ENCODE measurements at regions of chr20 and their contacts with region 1.

Region 1: DNA sequence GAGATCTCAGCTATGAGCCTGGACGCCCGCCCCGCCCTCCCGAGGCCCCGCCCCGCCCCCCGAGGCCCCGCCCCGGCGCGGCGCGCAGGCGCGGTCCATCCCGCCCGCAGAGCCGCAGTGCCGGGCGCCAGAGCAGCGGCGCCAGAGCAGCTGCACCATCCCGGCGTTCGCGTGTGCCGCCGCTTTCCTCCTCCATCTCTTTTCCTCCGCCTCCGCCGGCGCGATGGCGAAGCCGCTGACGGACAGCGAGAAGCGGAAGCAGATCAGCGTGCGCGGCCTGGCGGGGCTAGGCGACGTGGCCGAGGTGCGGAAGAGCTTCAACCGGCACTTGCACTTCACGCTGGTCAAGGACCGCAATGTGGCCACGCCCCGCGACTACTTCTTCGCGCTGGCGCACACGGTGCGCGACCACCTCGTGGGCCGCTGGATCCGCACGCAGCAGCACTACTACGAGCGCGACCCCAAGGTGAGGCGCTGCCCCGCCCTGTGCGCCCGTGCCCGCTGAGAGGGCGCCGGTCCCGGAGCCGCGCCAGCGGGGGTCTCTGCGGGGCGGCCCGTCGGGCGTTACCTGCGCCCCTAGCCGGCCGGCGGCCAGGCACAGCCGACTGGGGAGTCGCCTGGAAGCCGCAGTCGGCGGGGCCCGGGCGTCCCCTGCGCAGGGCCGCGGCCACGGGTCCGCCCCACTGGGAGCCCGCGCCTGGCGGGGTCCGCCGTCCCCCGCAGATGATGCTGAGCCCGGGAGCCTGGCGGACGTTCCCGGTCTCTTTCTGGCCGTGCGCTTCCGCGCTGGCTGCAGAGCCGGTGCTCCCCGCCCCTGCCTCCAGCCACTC is at the start of gene PYGB:
- DNase-seq: peak; percentile 81 to 82
- H3K4me3 ChIP-seq: peak within 1 kb of the TSS; percentile 97
- H3K4me3 Mint-ChIP-seq: peak within 1 kb of the TSS; percentile 91
- H3K27ac Mint-ChIP-seq: peak within 1 kb of the TSS; percentile 79
- H3K4me1 ChIP-seq: peaks cover 30% of the 10 kb centered on the region
- H3K4me1 Mint-ChIP-seq: peaks cover 15% of the 10 kb centered on the region
- H3K27me3 ChIP-seq: no peaks in the 10 kb centered on the region
- H3K27me3 Mint-ChIP-seq: no peaks in the 10 kb centered on the region
- CTCF ChIP-seq: no peak
- total RNA-seq, gene PYGB: 67.9 and 78.9 TPM in 2 replicates

Region 2: DNA sequence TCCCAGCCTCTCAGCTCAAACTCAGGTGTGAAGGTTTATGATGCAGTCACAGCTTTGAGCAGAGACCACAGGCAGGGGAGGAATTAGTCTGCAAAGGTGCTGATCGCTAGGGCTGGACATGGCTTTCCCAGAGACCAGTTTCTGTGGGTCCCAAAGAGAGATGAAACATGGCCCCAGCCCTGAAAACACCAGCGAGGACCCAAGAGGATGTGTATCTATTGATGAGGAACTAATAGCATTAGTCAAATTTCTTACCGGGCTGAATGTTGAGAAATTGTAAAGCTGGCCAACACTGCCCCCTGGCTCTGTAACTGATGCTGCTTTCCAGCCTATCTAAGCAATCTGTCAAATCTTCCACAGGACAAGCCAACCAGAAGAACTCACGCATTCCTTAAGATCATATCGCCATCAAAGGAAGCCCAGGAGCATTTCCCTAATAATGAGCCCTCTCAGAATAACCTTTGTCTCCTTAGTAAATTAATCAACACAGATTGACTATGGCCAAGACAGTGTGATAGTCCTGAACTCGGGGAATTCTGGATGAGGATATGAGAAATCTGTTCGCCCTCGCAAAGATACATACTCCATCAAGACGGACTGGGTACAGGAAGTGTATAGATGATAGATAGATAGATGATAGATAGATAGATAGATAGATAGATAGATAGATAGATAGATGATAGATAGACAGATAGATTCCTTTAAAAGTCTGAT is 182.4 kb before region 1 on chr20:
- CTCF ChIA-PET with region 1: interaction called, 6 read pairs
- POLR2A ChIA-PET with region 1: interaction called, 3 read pairs
- intact Hi-C with region 1: loop called (anchors 10 kb)
- DNase-seq: peak; percentile 73 to 77
- H3K4me3 ChIP-seq: no peak overlapping the region
- H3K4me3 Mint-ChIP-seq: peak overlapping the region; percentile 68
- H3K27ac Mint-ChIP-seq: peak overlapping the region; percentile 56
- H3K4me1 ChIP-seq: peaks cover 34% of the 10 kb centered on the region
- H3K4me1 Mint-ChIP-seq: peaks cover 40% of the 10 kb centered on the region
- H3K27me3 ChIP-seq: no peaks in the 10 kb centered on the region
- H3K27me3 Mint-ChIP-seq: no peaks in the 10 kb centered on the region
- CTCF ChIP-seq: peak; percentile 80 to 91

Region 3: DNA sequence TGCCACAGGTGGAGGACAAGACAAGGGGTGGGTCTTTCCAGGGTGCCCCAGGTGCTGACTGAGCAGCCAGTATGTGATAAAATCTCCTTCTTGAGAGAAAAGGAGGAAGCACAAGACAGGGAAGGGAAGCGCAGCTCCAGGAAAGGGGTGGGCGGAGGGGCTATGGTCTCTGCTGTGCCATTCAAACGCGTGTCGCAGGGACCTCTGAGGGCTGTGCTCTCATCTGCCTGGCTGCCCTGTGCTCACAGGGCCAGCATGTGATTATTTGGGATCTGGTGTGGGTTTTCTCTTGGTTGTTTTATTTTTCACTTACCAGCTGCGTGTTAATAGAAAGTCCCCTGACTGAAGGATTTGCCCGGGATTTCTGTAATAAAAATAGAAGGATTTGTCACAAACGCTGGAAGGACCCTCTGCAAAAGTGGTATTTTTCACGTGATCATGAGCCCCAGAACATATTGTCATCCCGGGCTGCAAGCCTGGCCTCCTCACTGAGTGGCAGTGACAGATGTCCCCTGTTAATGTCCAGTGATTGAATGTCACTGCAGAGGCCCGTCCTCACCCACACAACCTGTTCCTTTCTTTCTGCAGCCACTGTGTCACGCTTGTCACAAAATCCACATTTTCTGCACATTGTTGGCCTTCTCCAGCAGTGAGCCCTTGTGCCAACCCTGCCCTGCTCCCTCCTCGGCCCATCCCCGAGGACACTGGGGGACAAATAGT is 131.3 kb before region 1 on chr20:
- CTCF ChIA-PET with region 1: no interaction called
- POLR2A ChIA-PET with region 1: no interaction called
- intact Hi-C with region 1: no loop called
- DNase-seq: no peak
- H3K4me3 ChIP-seq: no peak overlapping the region
- H3K4me3 Mint-ChIP-seq: no peak overlapping the region
- H3K27ac Mint-ChIP-seq: no peak overlapping the region
- H3K4me1 ChIP-seq: peaks cover 15% of the 10 kb centered on the region
- H3K4me1 Mint-ChIP-seq: peaks cover 3% of the 10 kb centered on the region
- H3K27me3 ChIP-seq: no peaks in the 10 kb centered on the region
- H3K27me3 Mint-ChIP-seq: peaks cover 5% of the 10 kb centered on the region
- CTCF ChIP-seq: no peak

Region 4: DNA sequence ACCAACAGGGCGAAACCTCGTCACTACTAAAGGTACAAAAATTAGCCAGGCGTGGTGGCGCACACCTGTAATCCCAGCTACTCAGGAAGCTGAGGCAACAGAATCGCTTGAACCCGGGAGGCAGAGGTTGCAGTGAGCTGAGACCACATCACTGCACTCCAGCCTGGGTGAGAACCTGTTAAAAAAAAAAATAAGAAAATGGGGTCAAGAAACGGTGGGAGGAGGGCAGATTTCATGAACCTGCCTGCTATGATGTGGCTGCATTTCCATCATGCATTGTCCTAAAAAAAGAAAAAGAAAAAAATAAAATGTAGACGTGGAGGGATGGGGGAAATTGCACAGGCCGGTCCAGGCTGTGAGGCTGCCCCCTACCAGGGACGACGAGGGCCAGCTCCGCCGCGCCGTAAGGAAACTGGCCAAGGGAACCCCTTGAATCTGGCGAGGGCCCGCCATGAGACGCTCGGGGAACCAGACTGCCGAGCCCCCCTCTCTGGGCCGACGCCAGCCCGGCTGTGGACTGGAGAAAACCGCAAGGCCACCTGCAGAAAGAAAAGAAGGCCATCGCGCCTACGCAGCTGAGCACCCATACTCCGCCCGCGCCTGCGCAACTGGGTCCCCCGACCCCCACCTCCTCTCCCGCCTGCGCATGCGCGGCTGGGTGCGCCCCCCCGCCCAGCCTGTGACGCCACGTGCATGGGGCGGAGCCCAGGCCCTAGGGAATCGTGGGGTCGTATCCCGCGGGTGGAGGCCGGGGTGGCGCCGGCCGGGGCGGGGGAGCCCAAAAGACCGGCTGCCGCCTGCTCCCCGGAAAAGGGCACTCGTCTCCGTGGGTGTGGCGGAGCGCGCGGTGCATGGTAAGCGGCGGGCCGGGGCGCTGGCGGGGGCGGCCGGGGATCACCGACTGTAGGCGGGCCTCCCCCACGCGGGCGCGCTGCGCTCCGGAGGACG is 52.9 kb before region 1 on chr20 and contains the start of gene ENTPD6:
- CTCF ChIA-PET with region 1: interaction called, 17 read pairs
- POLR2A ChIA-PET with region 1: interaction called, 18 read pairs
- intact Hi-C with region 1: loop called (anchors 1 kb)
- DNase-seq: peak; percentile 92 to 97
- H3K4me3 ChIP-seq: peak within 1 kb of the TSS; percentile 80
- H3K4me3 Mint-ChIP-seq: peak within 1 kb of the TSS; percentile 78
- H3K27ac Mint-ChIP-seq: peak within 1 kb of the TSS; percentile 33
- H3K4me1 ChIP-seq: peaks cover 4% of the 10 kb centered on the region; the same call in 1 of the 2 replicates
- H3K4me1 Mint-ChIP-seq: no peaks in the 10 kb centered on the region
- H3K27me3 ChIP-seq: no peaks in the 10 kb centered on the region
- H3K27me3 Mint-ChIP-seq: no peaks in the 10 kb centered on the region
- CTCF ChIP-seq: peak in 1 of 2 experiments; percentile 48
- total RNA-seq, gene ENTPD6: 86.6 and 89.4 TPM in 2 replicates

Region 5: GRCh38 chr20:25237610-25238318 is 10.4 kb before region 1 on chr20:
- CTCF ChIA-PET with region 1: interaction called, 6 read pairs
- POLR2A ChIA-PET with region 1: interaction called, 6 read pairs
- intact Hi-C with region 1: loop called (anchors 1 kb)
- DNase-seq: peak in 1 of 2 experiments; percentile 67
- H3K4me3 ChIP-seq: no peak overlapping the region
- H3K4me3 Mint-ChIP-seq: no peak overlapping the region
- H3K27ac Mint-ChIP-seq: peak overlapping the region; percentile 88
- H3K4me1 ChIP-seq: peaks cover 41% of the 10 kb centered on the region
- H3K4me1 Mint-ChIP-seq: peaks cover 48% of the 10 kb centered on the region
- H3K27me3 ChIP-seq: no peaks in the 10 kb centered on the region
- H3K27me3 Mint-ChIP-seq: no peaks in the 10 kb centered on the region
- CTCF ChIP-seq: no peak

Region 6: GRCh38 chr20:25281541-25281991 is 33.4 kb after region 1 on chr20:
- CTCF ChIA-PET with region 1: no interaction called
- POLR2A ChIA-PET with region 1: no interaction called
- intact Hi-C with region 1: no loop called
- DNase-seq: peak in 1 of 2 experiments; percentile 18
- H3K4me3 ChIP-seq: no peak overlapping the region
- H3K4me3 Mint-ChIP-seq: no peak overlapping the region
- H3K27ac Mint-ChIP-seq: no peak overlapping the region
- H3K4me1 ChIP-seq: no peaks in the 10 kb centered on the region
- H3K4me1 Mint-ChIP-seq: no peaks in the 10 kb centered on the region
- H3K27me3 ChIP-seq: no peaks in the 10 kb centered on the region
- H3K27me3 Mint-ChIP-seq: no peaks in the 10 kb centered on the region
- CTCF ChIP-seq: no peak

Region 7: GRCh38 chr20:25336561-25337422 is 88.6 kb after region 1 on chr20:
- CTCF ChIA-PET with region 1: no interaction called
- POLR2A ChIA-PET with region 1: no interaction called
- intact Hi-C with region 1: no loop called
- DNase-seq: peak; percentile 62 to 73
- H3K4me3 ChIP-seq: no peak overlapping the region
- H3K4me3 Mint-ChIP-seq: no peak overlapping the region
- H3K27ac Mint-ChIP-seq: peak overlapping the region; percentile 36
- H3K4me1 ChIP-seq: peaks cover 26% of the 10 kb centered on the region
- H3K4me1 Mint-ChIP-seq: peaks cover 28% of the 10 kb centered on the region
- H3K27me3 ChIP-seq: no peaks in the 10 kb centered on the region
- H3K27me3 Mint-ChIP-seq: no peaks in the 10 kb centered on the region
- CTCF ChIP-seq: peak; percentile 60 to 81